Activated CD8-positive, alpha-beta T cell treated with anti-CD3 and anti-CD28 coated beads, Interleukin-2, amount 10 ng/mL, durations not matched to agents 7 days and 5 days (primary cell): ENCODE measurements at regions of chr2 and their contacts with region 1.

Region 1: GRCh38 chr2:197168705-197169104 is 141.9 kb downstream of the ANKRD44 start:
- DNase-seq: peak; percentile 81
- ATAC-seq: peak; percentile 83
- H3K4me3 Mint-ChIP-seq: no peak overlapping the region
- H3K27ac Mint-ChIP-seq: peak overlapping the region; percentile 58
- H3K4me1 Mint-ChIP-seq: peaks cover 46% of the 10 kb centered on the region
- H3K27me3 Mint-ChIP-seq: no peaks in the 10 kb centered on the region

Region 2: DNA sequence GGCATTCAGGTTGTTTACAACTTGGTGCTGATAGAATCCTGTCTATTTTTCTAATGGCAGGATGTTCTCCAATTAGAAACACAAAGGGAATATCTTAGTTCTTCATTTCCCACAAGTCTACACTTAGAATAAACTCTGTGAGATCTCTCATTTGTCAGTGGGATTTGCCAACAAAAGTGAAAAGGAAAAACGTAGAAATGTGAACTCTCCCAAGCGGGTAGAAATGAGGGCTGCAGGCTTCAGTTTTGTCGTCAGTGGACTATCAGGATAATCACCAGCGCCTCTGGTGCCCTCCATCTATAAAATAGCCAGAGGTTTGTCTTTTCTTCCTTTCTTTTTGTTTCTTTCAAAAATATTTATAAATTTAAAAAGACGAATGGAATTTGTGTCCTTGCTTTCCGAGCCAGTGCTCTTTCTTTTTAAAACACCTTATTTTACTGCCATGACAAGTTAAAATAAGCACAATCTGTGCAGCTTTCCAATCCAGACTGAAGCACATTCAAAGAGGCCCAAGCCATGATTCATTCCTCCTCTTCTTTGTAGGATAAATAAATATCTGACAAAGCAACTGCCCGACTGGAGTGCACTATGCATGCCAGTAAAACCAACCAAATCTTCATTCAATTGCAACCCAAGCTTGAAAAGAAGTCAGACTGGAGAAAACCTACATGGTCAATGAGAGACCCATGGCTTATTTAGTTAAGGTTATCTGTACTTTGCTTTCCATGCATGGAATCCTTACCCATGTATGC is 43.9 kb before region 1 on chr2:
- CTCF ChIA-PET with region 1: interaction called, 15 read pairs
- POLR2A ChIA-PET with region 1: interaction called, 3 read pairs
- DNase-seq: no peak
- ATAC-seq: no peak
- H3K4me3 Mint-ChIP-seq: no peak overlapping the region
- H3K27ac Mint-ChIP-seq: no peak overlapping the region
- H3K4me1 Mint-ChIP-seq: peaks cover 51% of the 10 kb centered on the region
- H3K27me3 Mint-ChIP-seq: no peaks in the 10 kb centered on the region

Region 3: DNA sequence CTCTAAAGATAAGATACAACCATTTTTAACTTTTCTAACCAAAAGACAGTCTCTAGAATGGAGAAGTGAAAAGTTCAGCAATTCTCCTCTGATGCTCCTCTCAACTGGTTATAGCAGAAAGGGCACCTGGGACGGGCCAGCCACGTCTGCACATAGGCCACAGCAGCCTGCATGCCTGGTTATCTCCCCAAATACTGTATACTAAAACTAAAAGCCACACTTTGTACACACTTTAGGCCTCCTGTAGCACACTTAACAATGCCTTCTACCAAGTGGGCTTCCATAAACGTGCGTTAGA is 37.2 kb before region 1 on chr2:
- CTCF ChIA-PET with region 1: interaction called, 11 read pairs
- POLR2A ChIA-PET with region 1: interaction called, 3 read pairs
- DNase-seq: no peak
- ATAC-seq: no peak
- H3K4me3 Mint-ChIP-seq: no peak overlapping the region
- H3K27ac Mint-ChIP-seq: peak overlapping the region; percentile 65
- H3K4me1 Mint-ChIP-seq: peaks cover 78% of the 10 kb centered on the region
- H3K27me3 Mint-ChIP-seq: no peaks in the 10 kb centered on the region

Region 4: DNA sequence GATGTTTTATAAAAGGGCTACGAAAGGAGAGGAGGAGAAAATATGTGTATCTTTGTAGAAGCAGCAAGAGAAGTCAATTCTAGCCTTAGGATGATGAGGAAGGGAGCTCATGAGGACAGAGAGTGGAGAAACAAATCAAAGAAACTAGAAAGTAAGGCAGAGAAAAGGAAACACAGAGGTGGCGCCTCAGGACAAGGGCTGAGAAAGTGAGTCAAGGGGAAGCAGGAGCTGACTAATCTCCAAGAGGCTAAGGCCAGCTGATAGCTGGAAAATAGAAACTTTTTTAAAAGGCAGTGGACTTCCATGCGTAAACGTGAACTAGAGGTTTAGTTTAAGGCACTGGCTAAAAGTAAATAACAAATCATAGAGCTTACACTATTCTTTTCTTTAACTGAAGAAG is 31.5 kb before region 1 on chr2:
- CTCF ChIA-PET with region 1: interaction called, 11 read pairs
- POLR2A ChIA-PET with region 1: no interaction called
- DNase-seq: no peak
- ATAC-seq: no peak
- H3K4me3 Mint-ChIP-seq: no peak overlapping the region
- H3K27ac Mint-ChIP-seq: peak overlapping the region; percentile 17
- H3K4me1 Mint-ChIP-seq: peaks cover 88% of the 10 kb centered on the region
- H3K27me3 Mint-ChIP-seq: no peaks in the 10 kb centered on the region

Region 5: GRCh38 chr2:197152451-197153228 is 16.1 kb before region 1 on chr2:
- CTCF ChIA-PET with region 1: interaction called, 28 read pairs
- POLR2A ChIA-PET with region 1: no interaction called
- DNase-seq: no peak
- ATAC-seq: peak; percentile 64
- H3K4me3 Mint-ChIP-seq: no peak overlapping the region
- H3K27ac Mint-ChIP-seq: peak overlapping the region; percentile 45
- H3K4me1 Mint-ChIP-seq: peaks cover 69% of the 10 kb centered on the region
- H3K27me3 Mint-ChIP-seq: no peaks in the 10 kb centered on the region

Region 6: GRCh38 chr2:197179744-197180498 is 11.2 kb after region 1 on chr2:
- CTCF ChIA-PET with region 1: interaction called, 27 read pairs
- POLR2A ChIA-PET with region 1: no interaction called
- DNase-seq: no peak
- ATAC-seq: no peak
- H3K4me3 Mint-ChIP-seq: no peak overlapping the region
- H3K27ac Mint-ChIP-seq: no peak overlapping the region
- H3K4me1 Mint-ChIP-seq: peaks cover 36% of the 10 kb centered on the region
- H3K27me3 Mint-ChIP-seq: no peaks in the 10 kb centered on the region